ENCODE measurements at regions of chr17 and their contacts with region 1.

Region 1: GRCh38 chr17:63709098-63709497 is 9.2 kb upstream of the LIMD2 start:
- DNase-seq: peak; percentile 35
- ATAC-seq: no peak

Region 2: GRCh38 chr17:63773381-63774140 is 64.5 kb after region 1 on chr17 and contains the start of gene CCDC47:
- intact Hi-C with region 1: loop called (anchors 2 kb)
- DNase-seq: peak; percentile 98
- ATAC-seq: peak; percentile 98
- total RNA-seq, gene CCDC47: 74.0 TPM

Region 3: DNA sequence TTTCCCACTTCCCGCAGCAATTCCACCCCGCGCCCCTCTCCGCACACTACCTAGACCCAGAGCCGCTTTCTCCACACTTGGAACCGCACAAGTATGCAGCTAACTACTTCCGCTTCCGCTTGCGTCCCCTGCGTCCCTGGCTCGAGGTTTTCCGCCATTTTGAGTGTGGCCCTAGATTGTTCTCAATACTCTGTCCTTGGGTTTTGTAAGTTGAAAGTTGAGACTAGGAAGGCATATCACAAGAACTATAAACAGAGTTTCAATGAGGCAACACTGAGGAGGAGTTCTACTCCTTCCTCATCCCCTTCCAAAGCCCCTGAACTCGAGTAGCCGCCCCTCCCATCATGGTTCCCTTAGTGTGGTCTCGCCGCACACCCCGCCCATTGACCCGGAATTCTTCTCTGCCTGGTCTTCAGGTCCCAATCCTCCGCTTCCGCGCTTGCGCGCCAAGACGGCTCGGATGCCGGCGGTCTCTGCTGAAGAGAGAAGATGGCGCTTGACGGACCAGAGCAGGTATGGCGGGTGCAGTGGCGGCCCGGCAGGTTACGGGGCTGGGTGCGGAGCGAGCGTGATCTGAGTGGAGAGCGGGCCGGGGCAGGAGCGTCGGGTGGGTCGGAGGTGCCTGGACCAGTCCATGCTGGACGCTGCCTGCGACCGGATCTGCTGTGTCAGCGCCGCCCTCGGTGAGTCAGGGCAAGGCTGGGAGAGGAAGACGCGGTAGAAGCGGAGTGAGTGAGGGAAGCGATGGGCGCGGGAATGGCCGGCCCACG is 118.1 kb after region 1 on chr17 and contains the starts of genes FTSJ3 and PSMC5:
- intact Hi-C with region 1: no loop called
- DNase-seq: peak; percentile 96
- ATAC-seq: peak; percentile 97
- total RNA-seq, gene FTSJ3: 41.9 TPM
- total RNA-seq, gene PSMC5: 77.1 TPM

Region 4: DNA sequence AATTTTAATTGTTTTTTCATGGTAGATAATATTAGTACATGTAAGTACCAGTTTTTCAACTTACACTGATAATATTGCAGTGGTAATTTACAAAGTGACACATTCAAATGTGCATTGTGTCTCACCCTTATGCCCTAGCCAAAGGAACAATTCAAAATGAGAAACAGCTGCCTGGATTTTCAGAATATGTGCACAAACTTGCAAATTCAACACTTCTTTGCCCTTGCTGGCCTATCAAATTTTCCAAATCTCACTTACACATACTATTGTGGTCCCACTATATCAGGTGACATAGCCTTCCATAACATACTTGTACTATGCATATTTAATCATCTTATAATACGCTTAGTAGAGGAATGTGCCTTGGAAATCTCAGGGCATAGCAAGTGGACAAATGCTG is 1242.8 kb after region 1 on chr17:
- intact Hi-C with region 1: no loop called
- DNase-seq: no peak
- ATAC-seq: no peak

Measured in sciatic nerve (tissue), 2 donors.